PC-9 (cell line): ENCODE measurements at regions of chr12 and their contacts with region 1.

Region 1: GRCh38 chr12:109597795-109598427 is 24.3 kb downstream of the MVK start:
- DNase-seq: peak; percentile 45 to 81
- H3K4me3 ChIP-seq: no peak overlapping the region
- H3K27ac ChIP-seq: no peak overlapping the region
- H3K4me1 ChIP-seq: no peaks in the 10 kb centered on the region
- H3K27me3 ChIP-seq: no peaks in the 10 kb centered on the region
- CTCF ChIP-seq: peak; percentile 97

Region 2: DNA sequence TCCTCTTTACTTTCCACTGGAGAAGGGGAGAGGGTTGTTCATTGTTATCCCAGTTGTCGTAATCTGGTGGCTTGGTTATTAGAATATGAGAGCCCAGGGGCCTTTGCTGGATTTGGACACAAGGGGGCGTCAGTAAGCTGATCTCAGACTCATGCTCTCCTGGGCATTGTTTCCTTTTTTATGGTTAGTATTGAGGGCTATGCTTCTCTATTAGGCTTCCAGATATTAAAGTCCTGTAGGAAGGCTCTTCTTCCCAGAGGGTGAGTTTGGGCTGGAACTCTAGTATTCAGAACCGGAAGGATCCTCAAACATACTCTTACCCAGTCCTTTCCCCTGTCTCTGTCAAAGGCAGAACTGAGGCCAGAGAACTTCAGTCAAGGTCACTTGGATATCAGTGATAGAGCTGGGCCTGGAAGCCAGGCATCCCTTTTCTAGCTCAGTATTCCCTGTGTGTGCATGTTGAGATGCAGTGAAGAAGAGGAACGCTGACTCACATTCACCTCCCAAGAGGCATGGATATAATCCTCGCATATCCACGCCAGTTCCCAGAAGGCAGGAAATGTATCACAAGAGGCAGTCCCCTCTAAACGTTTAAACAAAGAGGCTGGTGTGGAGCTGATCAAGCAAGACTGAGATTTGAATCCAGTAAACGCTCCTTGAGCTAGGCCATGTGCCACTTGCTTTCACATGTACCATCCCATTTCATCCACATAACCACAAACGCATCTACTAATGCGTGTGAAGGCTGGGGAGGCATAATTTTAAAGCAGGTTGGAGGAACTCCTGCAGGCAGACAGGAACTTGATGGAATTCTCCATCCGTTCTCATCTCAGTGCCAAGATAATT is 78.9 kb before region 1 on chr12:
- CTCF ChIA-PET with region 1: no interaction called
- POLR2A ChIA-PET with region 1: no interaction called
- intact Hi-C with region 1: loop called (anchors 1 kb)
- DNase-seq: peak in 1 of 2 experiments; percentile 57
- H3K4me3 ChIP-seq: no peak overlapping the region
- H3K27ac ChIP-seq: no peak overlapping the region
- H3K4me1 ChIP-seq: no peaks in the 10 kb centered on the region
- H3K27me3 ChIP-seq: no peaks in the 10 kb centered on the region
- CTCF ChIP-seq: peak; percentile 93

Region 3: DNA sequence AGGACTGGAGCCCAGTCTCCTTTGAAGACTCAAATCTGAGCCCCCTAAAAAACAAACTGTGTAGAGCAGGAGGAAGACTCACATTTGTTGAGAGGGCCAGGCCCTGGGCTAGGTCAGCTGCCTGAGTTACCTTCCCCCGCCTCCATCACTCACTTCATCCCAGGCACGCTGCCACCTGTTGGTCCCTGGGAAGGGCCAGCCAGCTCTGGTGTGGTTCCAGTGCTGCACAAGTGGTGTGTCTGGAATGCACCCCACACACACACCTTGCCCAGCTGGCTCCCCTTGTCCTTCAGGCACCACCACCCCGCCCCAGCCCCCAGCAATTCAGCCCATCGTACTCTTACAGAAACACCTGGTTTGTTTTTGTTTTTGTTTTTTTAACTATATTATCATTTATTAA is 15.3 kb before region 1 on chr12:
- CTCF ChIA-PET with region 1: interaction called, 17 read pairs
- POLR2A ChIA-PET with region 1: interaction called, 5 read pairs
- intact Hi-C with region 1: no loop called
- DNase-seq: peak; percentile 41 to 79
- H3K4me3 ChIP-seq: no peak overlapping the region
- H3K27ac ChIP-seq: peak overlapping the region; percentile 48; the same call in 1 of the 2 replicates
- H3K4me1 ChIP-seq: peaks cover 37% of the 10 kb centered on the region
- H3K27me3 ChIP-seq: no peaks in the 10 kb centered on the region
- CTCF ChIP-seq: no peak; the same call in 1 of the 2 replicates

Region 4: GRCh38 chr12:109625131-109625559 is 27.2 kb after region 1 on chr12:
- CTCF ChIA-PET with region 1: interaction called, 12 read pairs
- POLR2A ChIA-PET with region 1: no interaction called
- intact Hi-C with region 1: no loop called
- DNase-seq: peak; percentile 15 to 53
- H3K4me3 ChIP-seq: no peak overlapping the region
- H3K27ac ChIP-seq: no peak overlapping the region
- H3K4me1 ChIP-seq: no peaks in the 10 kb centered on the region
- H3K27me3 ChIP-seq: peaks cover 61% of the 10 kb centered on the region
- CTCF ChIP-seq: no peak; the same call in 1 of the 2 replicates

Region 5: GRCh38 chr12:109767456-109767855 is 169.5 kb after region 1 on chr12:
- CTCF ChIA-PET with region 1: interaction called, 4 read pairs
- POLR2A ChIA-PET with region 1: interaction called, 37 read pairs
- intact Hi-C with region 1: no loop called
- DNase-seq: no peak
- H3K4me3 ChIP-seq: no peak overlapping the region
- H3K27ac ChIP-seq: no peak overlapping the region
- H3K4me1 ChIP-seq: peaks cover 4% of the 10 kb centered on the region
- H3K27me3 ChIP-seq: no peaks in the 10 kb centered on the region
- CTCF ChIP-seq: no peak

Region 6: GRCh38 chr12:109775172-109775881 is 177.4 kb after region 1 on chr12:
- CTCF ChIA-PET with region 1: interaction called, 6 read pairs
- POLR2A ChIA-PET with region 1: no interaction called
- intact Hi-C with region 1: loop called (anchors 1 kb)
- DNase-seq: peak; percentile 57 to 68
- H3K4me3 ChIP-seq: no peak overlapping the region
- H3K27ac ChIP-seq: no peak overlapping the region
- H3K4me1 ChIP-seq: peaks cover 26% of the 10 kb centered on the region
- H3K27me3 ChIP-seq: no peaks in the 10 kb centered on the region
- CTCF ChIP-seq: peak; percentile 91

Region 7: GRCh38 chr12:109844983-109845823 is 247.3 kb after region 1 on chr12:
- CTCF ChIA-PET with region 1: interaction called, 3 read pairs
- POLR2A ChIA-PET with region 1: no interaction called
- intact Hi-C with region 1: loop called (anchors 5 kb)
- DNase-seq: peak; percentile 85 to 93
- H3K4me3 ChIP-seq: peak overlapping the region; percentile 37; the same call in 1 of the 2 replicates
- H3K27ac ChIP-seq: no peak overlapping the region
- H3K4me1 ChIP-seq: peaks cover 8% of the 10 kb centered on the region
- H3K27me3 ChIP-seq: no peaks in the 10 kb centered on the region
- CTCF ChIP-seq: peak; percentile 97